GM12878 (cell line): ENCODE measurements at regions of chr2 and their contacts with region 1.

Region 1: GRCh38 chr2:111134055-111134454 is 13.3 kb downstream of the BCL2L11 start:
- DNase-seq: no peak
- ATAC-seq: peak; percentile 45; the same call in 1 of the 3 replicates
- H3K4me3 ChIP-seq: no peak overlapping the region
- H3K27ac ChIP-seq: no peak overlapping the region
- H3K4me1 ChIP-seq: no peaks in the 10 kb centered on the region
- H3K27me3 ChIP-seq: no peaks in the 10 kb centered on the region; a peak in 1 of 4 replicates
- CTCF ChIP-seq: 0 out of 6 replicates have a peak, but pooled peaks of 1 of the 3 experiments have one; percentile 8
- EP300 ChIP-seq: no peak
- POLR2A ChIP-seq: no peak
- RAD21 ChIP-seq: no peak

Region 2: GRCh38 chr2:111148925-111149324 is 14.9 kb after region 1 on chr2:
- CTCF ChIA-PET with region 1: interaction called, 9 read pairs
- POLR2A ChIA-PET with region 1: no interaction called
- RAD21 ChIA-PET with region 1: interaction called, 3 read pairs
- SMC1A ChIA-PET with region 1: interaction called, 20 read pairs
- in situ Hi-C with region 1: no loop called
- intact Hi-C with region 1: no loop called
- DNase-seq: no peak
- ATAC-seq: no peak
- H3K4me3 ChIP-seq: no peak overlapping the region
- H3K27ac ChIP-seq: no peak overlapping the region
- H3K4me1 ChIP-seq: peaks cover 6% of the 10 kb centered on the region
- H3K27me3 ChIP-seq: no peaks in the 10 kb centered on the region
- CTCF ChIP-seq: no peak
- EP300 ChIP-seq: no peak
- POLR2A ChIP-seq: no peak
- RAD21 ChIP-seq: no peak